ENCODE measurements at regions of chr11 and their contacts with region 1.

Region 1: GRCh38 chr11:34051349-34052035 is at the start of gene CAPRIN1:
- DNase-seq: peak; percentile 91
- ATAC-seq: peak; percentile 78
- H3K4me3 Mint-ChIP-seq: peak within 1 kb of the TSS; percentile 98
- H3K27ac Mint-ChIP-seq: peak within 1 kb of the TSS; percentile 99
- H3K4me1 Mint-ChIP-seq: peaks cover 17% of the 10 kb centered on the region
- H3K27me3 Mint-ChIP-seq: peaks cover 2% of the 10 kb centered on the region
- total RNA-seq, gene CAPRIN1: 295 to 316 TPM

Region 2: GRCh38 chr11:32893343-32894148 is 1157.9 kb before region 1 on chr11:
- CTCF ChIA-PET with region 1: no interaction called
- POLR2A ChIA-PET with region 1: no interaction called
- intact Hi-C with region 1: loop called in 1 of 2 experiments (anchors 2 kb)
- DNase-seq: peak; percentile 77
- ATAC-seq: peak; percentile 45
- H3K4me3 Mint-ChIP-seq: peak overlapping the region; percentile 97
- H3K27ac Mint-ChIP-seq: peak overlapping the region; percentile 98
- H3K4me1 Mint-ChIP-seq: peaks cover 38% of the 10 kb centered on the region
- H3K27me3 Mint-ChIP-seq: no peaks in the 10 kb centered on the region

Region 3: GRCh38 chr11:33700425-33701271 is 350.8 kb before region 1 on chr11 and contains the start of gene C11orf91:
- CTCF ChIA-PET with region 1: no interaction called
- POLR2A ChIA-PET with region 1: no interaction called
- intact Hi-C with region 1: loop called in 1 of 2 experiments (anchors 2 kb)
- DNase-seq: peak; percentile 94
- ATAC-seq: peak; percentile 93
- H3K4me3 Mint-ChIP-seq: peak within 1 kb of the TSS; percentile 74
- H3K27ac Mint-ChIP-seq: peak within 1 kb of the TSS; percentile 45
- H3K4me1 Mint-ChIP-seq: peaks cover 18% of the 10 kb centered on the region
- H3K27me3 Mint-ChIP-seq: peaks cover 16% of the 10 kb centered on the region
- total RNA-seq, gene C11orf91: not detected

Region 4: GRCh38 chr11:33893711-33894397 is 157.6 kb before region 1 on chr11:
- CTCF ChIA-PET with region 1: no interaction called
- POLR2A ChIA-PET with region 1: interaction called, 3 read pairs
- intact Hi-C with region 1: loop called in 1 of 2 experiments (anchors 1 kb)
- DNase-seq: peak; percentile 92
- ATAC-seq: peak; percentile 95
- H3K4me3 Mint-ChIP-seq: peak overlapping the region; percentile 1
- H3K27ac Mint-ChIP-seq: peak overlapping the region; percentile 10
- H3K4me1 Mint-ChIP-seq: peaks cover 36% of the 10 kb centered on the region
- H3K27me3 Mint-ChIP-seq: peaks cover 69% of the 10 kb centered on the region

Region 5: DNA sequence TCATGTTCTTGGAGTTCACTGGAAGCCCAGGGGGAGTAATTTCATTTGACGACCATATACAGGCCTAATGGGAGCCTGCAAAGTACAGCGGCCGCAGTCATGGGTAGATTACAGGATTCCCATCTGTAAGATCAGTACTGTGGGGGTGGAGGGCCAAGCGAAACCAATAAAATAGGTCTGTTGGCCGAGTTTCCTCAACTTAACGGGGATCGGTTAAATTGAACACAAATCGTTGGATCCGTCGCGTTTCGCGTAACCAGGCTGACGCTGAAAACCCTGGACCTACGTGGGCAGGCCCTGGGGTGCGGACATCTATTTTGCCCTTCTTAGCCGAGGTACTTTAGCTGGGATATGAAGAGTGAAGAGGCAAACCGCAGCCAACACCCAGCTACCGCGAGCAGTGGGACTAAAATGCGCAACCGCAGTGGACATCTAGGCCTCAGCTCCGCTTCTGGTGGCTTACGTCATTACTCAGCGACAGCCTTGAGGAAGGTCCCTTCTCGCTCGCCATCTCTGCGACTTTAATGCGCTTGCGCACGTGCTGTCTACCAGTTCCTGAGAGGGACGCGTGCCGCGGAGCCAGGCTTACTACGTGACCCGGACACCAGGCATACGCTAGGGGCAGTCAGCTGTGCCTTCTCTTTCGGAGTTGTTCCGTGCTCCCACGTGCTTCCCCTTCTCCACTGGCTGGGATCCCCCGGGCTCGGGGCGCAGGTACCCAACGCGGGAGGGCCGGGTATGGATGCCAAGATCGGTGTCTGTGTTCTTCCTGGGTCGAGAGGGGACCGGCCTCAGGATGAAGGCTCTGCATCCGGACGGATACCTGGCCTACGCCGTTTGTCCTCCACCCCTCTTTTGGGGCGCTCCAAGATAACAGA is 53.8 kb after region 1 on chr11 and contains the start of gene NAT10:
- CTCF ChIA-PET with region 1: interaction called, 4 read pairs
- POLR2A ChIA-PET with region 1: interaction called, 8 read pairs
- intact Hi-C with region 1: loop called (anchors 1 kb)
- DNase-seq: peak; percentile 98
- ATAC-seq: peak; percentile 93
- H3K4me3 Mint-ChIP-seq: peak within 1 kb of the TSS; percentile 97
- H3K27ac Mint-ChIP-seq: peak within 1 kb of the TSS; percentile 99
- H3K4me1 Mint-ChIP-seq: peaks cover 57% of the 10 kb centered on the region
- H3K27me3 Mint-ChIP-seq: no peaks in the 10 kb centered on the region
- total RNA-seq, gene NAT10: 142 to 147 TPM

Region 6: GRCh38 chr11:34357701-34358257 is 306.3 kb after region 1 on chr11 and contains the start of gene ABTB2:
- CTCF ChIA-PET with region 1: interaction called, 4 read pairs
- POLR2A ChIA-PET with region 1: no interaction called
- intact Hi-C with region 1: loop called (anchors 1 to 5 kb)
- DNase-seq: peak; percentile 99
- ATAC-seq: peak; percentile 95
- H3K4me3 Mint-ChIP-seq: peak within 1 kb of the TSS; percentile 78
- H3K27ac Mint-ChIP-seq: peak within 1 kb of the TSS; percentile 67
- H3K4me1 Mint-ChIP-seq: peaks cover 28% of the 10 kb centered on the region
- H3K27me3 Mint-ChIP-seq: peaks cover 36% of the 10 kb centered on the region
- total RNA-seq, gene ABTB2: 1.2 TPM

Region 7: DNA sequence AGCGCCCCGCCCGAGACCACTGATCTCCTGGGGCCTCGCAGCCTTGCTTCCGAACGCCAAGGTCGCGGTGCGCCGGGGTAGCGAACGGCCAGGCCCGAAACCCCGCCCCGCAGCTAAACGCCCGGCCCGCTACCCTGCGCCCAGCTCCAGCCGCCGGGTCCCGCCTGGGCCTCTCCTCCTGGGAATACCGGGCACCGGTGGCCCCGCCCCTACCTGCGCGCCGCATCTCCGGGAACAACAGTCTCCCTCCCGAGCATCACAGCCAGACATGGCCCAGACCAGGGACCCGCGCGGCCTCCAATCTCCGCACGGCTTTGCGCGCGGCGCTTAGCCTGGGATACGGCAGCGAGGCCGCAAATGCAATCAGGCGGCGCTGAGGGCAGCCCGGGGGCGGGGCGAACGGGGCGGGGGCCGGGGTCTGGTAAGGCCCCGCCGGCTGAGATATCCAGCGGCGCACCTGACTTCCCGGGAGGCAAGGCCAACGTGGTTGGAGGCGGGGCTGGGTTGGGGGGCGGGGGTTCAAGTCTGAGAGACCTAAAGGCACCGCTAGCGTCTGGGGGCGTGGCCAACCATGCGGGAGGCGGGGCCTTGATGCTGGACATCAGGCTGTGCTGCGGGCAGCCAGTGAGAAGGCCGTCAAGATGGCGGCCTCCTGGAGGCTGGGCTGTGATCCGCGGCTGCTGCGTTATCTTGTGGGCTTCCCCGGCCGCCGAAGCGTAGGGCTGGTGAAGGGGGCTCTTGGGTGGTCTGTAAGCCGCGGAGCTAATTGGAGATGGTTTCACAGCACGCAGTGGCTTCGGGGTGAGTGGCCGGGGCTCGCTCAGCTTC is 864.7 kb after region 1 on chr11 and contains the starts of genes APIP and PDHX:
- CTCF ChIA-PET with region 1: no interaction called
- POLR2A ChIA-PET with region 1: no interaction called
- intact Hi-C with region 1: loop called in 1 of 2 experiments (anchors 1 kb)
- DNase-seq: peak; percentile 100
- ATAC-seq: peak; percentile 95
- H3K4me3 Mint-ChIP-seq: peak within 1 kb of the TSS; percentile 91
- H3K27ac Mint-ChIP-seq: peak within 1 kb of the TSS; percentile 95
- H3K4me1 Mint-ChIP-seq: peaks cover 40% of the 10 kb centered on the region
- H3K27me3 Mint-ChIP-seq: no peaks in the 10 kb centered on the region
- total RNA-seq, gene APIP: 43.6 to 43.7 TPM
- total RNA-seq, gene PDHX: 29.8 to 46.2 TPM

Region 8: GRCh38 chr11:34940026-34940677 is 888.7 kb after region 1 on chr11:
- CTCF ChIA-PET with region 1: no interaction called
- POLR2A ChIA-PET with region 1: no interaction called
- intact Hi-C with region 1: no loop called
- DNase-seq: no peak
- ATAC-seq: no peak
- H3K4me3 Mint-ChIP-seq: no peak overlapping the region
- H3K27ac Mint-ChIP-seq: no peak overlapping the region
- H3K4me1 Mint-ChIP-seq: peaks cover 21% of the 10 kb centered on the region
- H3K27me3 Mint-ChIP-seq: no peaks in the 10 kb centered on the region